ENCODE measurements at regions of chr9 and their contacts with region 1.

Region 1: DNA sequence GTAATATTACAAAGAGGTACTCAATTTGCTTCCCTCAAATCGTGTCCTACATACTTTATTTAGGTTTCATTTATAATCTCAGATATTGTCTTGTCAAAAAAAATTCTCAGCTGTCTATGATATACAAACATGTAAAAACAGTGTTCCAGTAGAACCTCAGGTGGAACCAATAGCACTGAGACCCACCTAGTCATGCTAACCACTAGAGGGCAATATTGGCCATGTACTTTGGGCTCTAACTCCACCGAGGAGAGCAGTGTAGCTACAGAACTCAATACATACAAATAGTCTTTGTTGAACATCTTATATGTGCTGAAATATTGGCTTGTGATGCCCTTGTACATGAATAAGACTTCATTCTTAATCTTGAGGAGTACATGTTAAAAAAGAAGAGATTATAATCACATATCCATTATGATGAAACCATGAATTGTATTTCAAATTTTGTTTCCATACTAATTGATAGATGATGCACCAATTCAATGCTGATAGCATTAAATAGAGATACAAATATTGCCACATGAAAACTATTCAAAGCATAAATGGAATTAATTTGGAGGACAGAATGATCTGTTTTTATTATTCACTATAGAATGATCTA is 71.2 kb upstream of the CNTLN start:
- DNase-seq: no peak
- ATAC-seq: peak; percentile 93
- H3K4me3 Mint-ChIP-seq: no peak overlapping the region
- H3K27ac Mint-ChIP-seq: no peak overlapping the region
- H3K4me1 Mint-ChIP-seq: peaks cover 4% of the 10 kb centered on the region
- H3K27me3 Mint-ChIP-seq: no peaks in the 10 kb centered on the region
- CTCF ChIP-seq: peak; percentile 68

Region 2: DNA sequence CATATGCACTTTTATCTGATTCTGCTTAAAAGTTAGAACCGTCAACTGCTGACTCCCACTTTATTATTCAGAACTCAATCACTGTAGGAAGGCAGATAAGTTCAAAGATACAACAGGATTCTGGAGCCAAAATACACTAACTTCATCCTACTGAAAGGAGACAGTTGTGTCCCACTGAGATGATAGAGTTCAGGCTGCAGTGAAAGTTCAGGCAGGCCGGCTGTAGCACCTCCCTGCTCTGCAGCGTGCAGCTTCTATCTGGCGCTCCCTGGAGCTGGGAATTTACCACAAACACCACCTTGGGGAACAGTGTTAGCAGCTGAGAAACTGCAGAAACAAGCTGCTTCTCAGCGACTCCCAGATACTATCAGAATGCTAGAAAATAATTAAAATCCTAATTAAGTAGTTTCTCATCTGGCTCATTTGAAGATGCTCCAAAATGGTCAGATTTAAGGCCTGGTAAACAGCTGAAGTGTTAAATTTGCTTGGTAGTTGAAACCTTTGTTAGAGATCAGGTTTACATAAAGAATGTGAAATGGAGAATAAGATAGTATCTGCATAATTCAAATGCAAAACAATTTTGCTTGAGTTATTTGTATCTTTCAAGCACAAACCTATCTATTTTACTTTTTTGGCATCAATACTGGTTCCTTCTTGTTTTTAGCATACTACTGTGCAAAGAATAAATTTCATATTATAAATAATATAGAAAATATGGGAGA is 18.9 kb after region 1 on chr9:
- CTCF ChIA-PET with region 1: interaction called, 15 read pairs
- POLR2A ChIA-PET with region 1: no interaction called
- DNase-seq: peak; percentile 60
- ATAC-seq: peak; percentile 99
- H3K4me3 Mint-ChIP-seq: no peak overlapping the region
- H3K27ac Mint-ChIP-seq: no peak overlapping the region
- H3K4me1 Mint-ChIP-seq: peaks cover 19% of the 10 kb centered on the region
- H3K27me3 Mint-ChIP-seq: no peaks in the 10 kb centered on the region
- CTCF ChIP-seq: no peak

Region 3: GRCh38 chr9:17402309-17402708 is 338.7 kb after region 1 on chr9:
- CTCF ChIA-PET with region 1: interaction called, 17 read pairs
- POLR2A ChIA-PET with region 1: no interaction called
- DNase-seq: no peak
- ATAC-seq: peak; percentile 85
- H3K4me3 Mint-ChIP-seq: no peak overlapping the region
- H3K27ac Mint-ChIP-seq: 0 out of 2 replicates have a peak overlapping the region, but pooled peaks have one; percentile 1
- H3K4me1 Mint-ChIP-seq: peaks cover 30% of the 10 kb centered on the region
- H3K27me3 Mint-ChIP-seq: no peaks in the 10 kb centered on the region
- CTCF ChIP-seq: no peak; the same call in 1 of the 2 replicates

Region 4: GRCh38 chr9:17462869-17463464 is 399.3 kb after region 1 on chr9:
- CTCF ChIA-PET with region 1: interaction called, 15 read pairs
- POLR2A ChIA-PET with region 1: no interaction called
- DNase-seq: peak; percentile 16
- ATAC-seq: no peak
- H3K4me3 Mint-ChIP-seq: no peak overlapping the region
- H3K27ac Mint-ChIP-seq: no peak overlapping the region
- H3K4me1 Mint-ChIP-seq: peaks cover 4% of the 10 kb centered on the region
- H3K27me3 Mint-ChIP-seq: no peaks in the 10 kb centered on the region
- CTCF ChIP-seq: peak; percentile 57; the same call in 1 of the 2 replicates

Region 5: DNA sequence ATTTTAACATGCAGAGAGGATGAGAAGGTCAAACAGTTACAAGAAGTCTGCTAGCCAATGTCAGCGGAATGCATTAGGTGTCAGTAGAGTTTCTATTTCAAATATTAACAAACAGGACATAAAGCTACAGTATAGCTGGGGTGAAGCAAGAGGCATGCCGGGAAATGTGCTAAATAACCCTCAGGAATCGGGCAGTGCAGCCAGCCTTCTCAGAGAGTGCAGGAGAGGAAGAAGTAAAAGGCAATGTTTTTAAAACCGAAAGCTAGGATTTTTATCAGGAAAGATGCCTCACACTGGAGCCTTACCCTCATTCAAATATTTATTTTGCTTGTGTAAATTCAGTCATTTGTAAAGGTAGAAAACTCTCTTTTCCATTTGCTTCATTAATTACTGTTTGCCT is 456.1 kb after region 1 on chr9:
- CTCF ChIA-PET with region 1: interaction called, 15 read pairs
- POLR2A ChIA-PET with region 1: no interaction called
- DNase-seq: no peak
- ATAC-seq: no peak
- H3K4me3 Mint-ChIP-seq: no peak overlapping the region
- H3K27ac Mint-ChIP-seq: no peak overlapping the region
- H3K4me1 Mint-ChIP-seq: peaks cover 21% of the 10 kb centered on the region
- H3K27me3 Mint-ChIP-seq: no peaks in the 10 kb centered on the region
- CTCF ChIP-seq: no peak

Measured in WTC11 (cell line).